Adrenal gland (tissue), 19 donors: ENCODE measurements at regions of chr1 and their contacts with region 1.

Region 1: DNA sequence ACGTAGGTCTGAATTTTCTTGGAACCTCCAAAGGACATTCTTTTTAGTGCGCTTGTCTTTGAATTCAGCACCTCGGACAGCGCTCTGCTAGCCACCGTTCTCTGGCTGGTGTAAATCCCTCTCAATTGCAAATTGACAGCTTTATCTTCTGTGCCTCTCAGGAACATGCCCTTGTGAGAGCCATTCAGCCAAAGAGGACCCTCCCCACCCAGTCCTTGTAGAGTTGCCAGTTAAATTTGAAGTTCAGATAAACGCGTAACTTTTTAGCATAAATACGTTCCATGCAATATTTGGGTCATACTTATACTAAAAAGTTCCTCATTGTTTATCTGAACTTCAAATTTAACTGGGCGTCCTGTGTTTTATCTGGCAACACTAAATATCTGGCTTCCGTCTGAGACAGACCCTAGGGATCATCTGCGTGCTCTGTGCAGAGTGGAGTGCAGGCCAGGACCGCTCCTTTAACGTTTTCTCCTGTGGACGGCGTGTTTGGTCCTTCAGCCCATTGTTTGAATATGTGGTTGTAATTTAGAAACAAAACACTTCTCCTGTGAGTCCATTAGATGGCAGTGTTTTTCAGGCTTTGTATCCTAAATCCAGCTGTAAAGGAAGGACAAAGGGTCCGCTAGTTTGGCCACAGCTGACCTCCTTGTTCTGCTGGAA is 7.0 kb downstream of the KCNAB2 start:
- DNase-seq: peak; percentile 51 to 77 (median 69)
- H3K4me3 ChIP-seq: no peak overlapping the region
- H3K27ac ChIP-seq: no peak overlapping the region
- H3K4me1 ChIP-seq: peaks cover 0 to under 1% of the 10 kb centered on the region in 2 donors
- H3K27me3 ChIP-seq: no peaks in the 10 kb centered on the region
- CTCF ChIP-seq: peak in 5 of 6 experiments; percentile 29 to 56 (median 50)
- POLR2A ChIP-seq: no peak

Region 2: DNA sequence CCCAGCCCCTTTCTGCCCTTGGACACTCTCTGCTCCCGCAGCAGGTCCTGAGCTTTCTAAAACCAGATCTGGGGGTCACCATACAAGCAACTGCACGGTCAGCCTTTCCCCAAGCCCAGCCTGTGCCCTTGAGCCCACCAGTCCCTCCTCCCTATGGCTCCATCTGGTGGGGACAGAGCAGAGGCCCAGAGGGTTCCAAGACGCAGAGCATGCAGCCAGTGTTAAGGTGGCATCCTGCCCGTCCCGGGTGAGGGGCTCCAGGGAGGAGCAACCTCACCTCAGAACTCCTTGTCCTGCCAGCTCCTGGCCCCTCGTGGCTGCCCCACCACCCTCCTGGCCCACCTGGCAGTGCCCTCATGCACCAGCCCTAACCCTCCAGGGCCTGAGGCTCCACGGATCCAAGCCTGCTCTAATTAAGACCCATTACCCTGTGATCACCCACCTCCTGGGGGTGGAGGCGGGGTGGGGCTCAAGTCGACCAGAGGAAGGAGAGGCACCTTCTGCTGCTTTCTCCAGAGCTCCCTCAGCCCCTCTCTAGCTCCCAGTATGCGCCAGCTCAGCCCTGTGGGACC is 119.0 kb after region 1 on chr1:
- intact Hi-C with region 1: loop called (anchors 10 kb)
- DNase-seq: no peak
- H3K4me3 ChIP-seq: no peak overlapping the region
- H3K27ac ChIP-seq: peak overlapping the region in 1 of 5 donors; percentile 8
- H3K4me1 ChIP-seq: no peaks in the 10 kb centered on the region
- H3K27me3 ChIP-seq: peaks cover 4% of the 10 kb centered on the region
- CTCF ChIP-seq: no peak
- POLR2A ChIP-seq: no peak

Region 3: GRCh38 chr1:6239950-6240768 is 187.5 kb after region 1 on chr1:
- intact Hi-C with region 1: loop called (anchors 5 kb)
- DNase-seq: no peak
- H3K4me3 ChIP-seq: no peak overlapping the region
- H3K27ac ChIP-seq: no peak overlapping the region
- H3K4me1 ChIP-seq: peaks cover 7 to 14% of the 10 kb centered on the region in 2 donors
- H3K27me3 ChIP-seq: peaks cover 41% of the 10 kb centered on the region
- CTCF ChIP-seq: no peak
- POLR2A ChIP-seq: no peak

Region 4: GRCh38 chr1:6343506-6344405 is 291.1 kb after region 1 on chr1:
- intact Hi-C with region 1: loop called in 1 of 2 experiments (anchors 10 kb)
- DNase-seq: peak; percentile 61 to 89 (median 65)
- H3K4me3 ChIP-seq: no peak overlapping the region
- H3K27ac ChIP-seq: no peak overlapping the region
- H3K4me1 ChIP-seq: no peaks in the 10 kb centered on the region
- H3K27me3 ChIP-seq: no peaks in the 10 kb centered on the region
- CTCF ChIP-seq: peak; percentile 64 to 91 (median 86)
- POLR2A ChIP-seq: no peak